ENCODE measurements at regions of chr4 and their contacts with region 1.

Region 1: GRCh38 chr4:177047070-177047850 is 254.5 kb upstream of the VEGFC start:
- DNase-seq: peak; percentile 52
- H3K27ac ChIP-seq: no peak overlapping the region
- CTCF ChIP-seq: peak; percentile 86

Region 2: DNA sequence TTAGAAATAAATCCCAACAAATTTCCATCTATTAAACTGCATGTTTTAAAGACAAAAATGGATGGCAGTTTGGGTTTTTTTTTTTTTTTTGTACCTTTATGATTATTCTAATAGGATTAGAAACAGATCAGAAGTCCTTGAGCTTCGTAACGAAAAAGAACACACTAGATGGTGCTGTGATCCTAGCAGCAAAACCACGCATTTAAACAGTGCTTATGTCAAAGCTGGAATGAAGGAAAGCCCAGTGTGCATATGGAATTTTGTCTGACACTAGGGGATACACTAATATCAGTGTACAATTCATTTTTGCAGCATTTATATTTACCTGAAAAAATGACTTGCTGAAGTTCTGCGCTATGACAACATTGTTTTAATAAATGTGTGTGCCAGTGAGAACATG is 483.7 kb before region 1 on chr4:
- CTCF ChIA-PET with region 1: interaction called, 15 read pairs
- POLR2A ChIA-PET with region 1: no interaction called
- DNase-seq: no peak
- H3K27ac ChIP-seq: no peak overlapping the region
- CTCF ChIP-seq: peak; percentile 18; the same call in 1 of the 2 replicates

Region 3: GRCh38 chr4:176792671-176793605 is 254.3 kb before region 1 on chr4 and contains the start of gene VEGFC:
- CTCF ChIA-PET with region 1: interaction called, 22 read pairs
- POLR2A ChIA-PET with region 1: no interaction called
- DNase-seq: peak; percentile 43
- H3K27ac ChIP-seq: peak within 1 kb of the TSS; percentile 89
- CTCF ChIP-seq: 0 out of 2 replicates have a peak, but pooled peaks have one; percentile 17

Region 4: DNA sequence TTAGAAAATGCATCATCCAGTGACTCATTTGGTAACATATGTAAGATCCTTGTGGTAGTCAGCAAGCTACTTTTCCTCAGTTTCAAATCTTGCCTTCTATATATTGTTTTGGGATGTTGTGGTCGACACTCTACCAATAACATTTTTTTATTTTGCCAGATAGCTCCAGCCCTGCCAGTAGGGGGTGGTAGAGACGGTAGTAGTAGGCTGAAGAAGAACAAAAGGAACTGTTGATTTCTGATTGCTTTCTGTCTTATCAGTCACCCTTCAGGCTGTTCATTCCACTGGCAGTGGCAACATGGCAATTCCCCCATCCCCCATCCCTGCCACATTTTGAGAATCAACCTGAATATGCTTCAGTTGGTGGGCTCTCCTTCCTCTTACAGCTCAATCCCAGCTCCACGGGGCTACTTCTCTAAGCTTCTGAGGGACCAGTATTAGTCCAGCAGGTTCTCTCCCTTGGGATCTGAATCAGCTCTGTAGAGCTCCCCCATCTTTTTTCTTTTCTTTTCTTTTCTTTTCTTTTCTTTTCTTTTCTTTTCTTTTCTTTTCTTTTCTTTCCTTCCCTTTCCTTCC is 83.1 kb before region 1 on chr4:
- CTCF ChIA-PET with region 1: interaction called, 12 read pairs
- POLR2A ChIA-PET with region 1: no interaction called
- DNase-seq: no peak
- H3K27ac ChIP-seq: no peak overlapping the region
- CTCF ChIP-seq: no peak

Region 5: DNA sequence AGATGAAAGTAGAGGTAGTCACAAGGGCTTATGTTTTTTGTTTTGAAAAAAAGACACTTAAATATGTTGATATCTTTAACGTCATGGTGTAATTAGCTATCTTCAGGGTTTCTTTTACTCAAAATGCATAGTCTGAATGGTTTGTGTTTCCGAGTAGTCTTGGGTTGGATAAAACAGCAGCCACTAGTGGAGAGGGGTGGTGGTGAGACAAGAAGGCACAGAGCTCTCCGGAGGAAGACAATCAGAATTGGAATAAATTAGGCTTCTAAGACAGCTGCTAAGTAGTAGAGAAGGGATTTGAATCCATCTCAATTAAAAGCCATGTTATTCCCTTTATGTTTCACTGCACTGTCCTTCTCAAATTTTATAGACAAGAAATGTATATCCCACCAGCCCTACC is 14.1 kb before region 1 on chr4:
- CTCF ChIA-PET with region 1: interaction called, 10 read pairs
- POLR2A ChIA-PET with region 1: no interaction called
- DNase-seq: no peak
- H3K27ac ChIP-seq: no peak overlapping the region
- CTCF ChIP-seq: no peak

Region 6: GRCh38 chr4:177419434-177419833 is 372.2 kb after region 1 on chr4:
- CTCF ChIA-PET with region 1: no interaction called
- POLR2A ChIA-PET with region 1: no interaction called
- DNase-seq: no peak
- H3K27ac ChIP-seq: no peak overlapping the region
- CTCF ChIP-seq: no peak